Activated CD4-positive, alpha-beta T cell treated with anti-CD3 and anti-CD28 coated beads, Interleukin-2, amount 10 ng/mL, durations not matched to agents 24 days and 14 days (primary cell): ENCODE measurements at regions of chr11 and their contacts with region 1.

Region 1: DNA sequence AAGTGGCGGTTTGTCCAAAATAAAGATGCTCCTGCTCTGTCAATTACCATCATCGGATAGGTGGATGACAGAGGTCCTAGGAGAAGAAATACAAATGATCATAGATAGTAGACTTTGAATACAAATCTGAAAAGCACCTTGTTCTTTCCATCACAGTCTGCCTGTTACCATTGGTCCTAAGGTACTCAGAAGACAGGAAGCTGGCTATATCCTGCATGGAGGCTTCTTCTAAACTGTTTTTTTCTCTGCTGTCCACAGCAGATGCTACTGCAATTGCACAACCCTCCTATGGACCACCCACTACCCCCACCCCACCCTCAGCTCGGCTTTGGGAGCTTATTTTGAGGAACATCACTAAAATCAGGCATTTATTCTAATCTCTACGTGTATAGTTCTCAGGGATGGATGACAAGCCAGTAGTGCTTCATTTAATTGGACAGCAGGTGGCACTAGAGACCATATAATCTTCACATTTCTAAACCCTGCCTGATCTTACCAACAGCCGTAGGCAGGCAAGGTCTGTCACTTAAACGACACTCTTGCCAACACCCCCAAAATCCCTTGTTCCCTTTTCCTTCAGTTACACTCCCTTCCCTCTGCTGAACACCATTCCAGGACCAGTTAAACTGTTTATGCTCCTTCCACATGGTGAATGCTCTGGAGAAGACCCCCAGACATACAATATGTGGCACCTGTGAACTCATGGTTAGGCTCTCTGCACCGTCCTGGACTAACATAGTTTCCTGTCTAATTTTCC is 6.6 kb upstream of the PTS start:
- DNase-seq: peak; percentile 86
- H3K4me3 Mint-ChIP-seq: no peak overlapping the region
- H3K27ac Mint-ChIP-seq: no peak overlapping the region
- H3K4me1 Mint-ChIP-seq: peaks cover 10% of the 10 kb centered on the region
- H3K27me3 Mint-ChIP-seq: peaks cover 8% of the 10 kb centered on the region

Region 2: DNA sequence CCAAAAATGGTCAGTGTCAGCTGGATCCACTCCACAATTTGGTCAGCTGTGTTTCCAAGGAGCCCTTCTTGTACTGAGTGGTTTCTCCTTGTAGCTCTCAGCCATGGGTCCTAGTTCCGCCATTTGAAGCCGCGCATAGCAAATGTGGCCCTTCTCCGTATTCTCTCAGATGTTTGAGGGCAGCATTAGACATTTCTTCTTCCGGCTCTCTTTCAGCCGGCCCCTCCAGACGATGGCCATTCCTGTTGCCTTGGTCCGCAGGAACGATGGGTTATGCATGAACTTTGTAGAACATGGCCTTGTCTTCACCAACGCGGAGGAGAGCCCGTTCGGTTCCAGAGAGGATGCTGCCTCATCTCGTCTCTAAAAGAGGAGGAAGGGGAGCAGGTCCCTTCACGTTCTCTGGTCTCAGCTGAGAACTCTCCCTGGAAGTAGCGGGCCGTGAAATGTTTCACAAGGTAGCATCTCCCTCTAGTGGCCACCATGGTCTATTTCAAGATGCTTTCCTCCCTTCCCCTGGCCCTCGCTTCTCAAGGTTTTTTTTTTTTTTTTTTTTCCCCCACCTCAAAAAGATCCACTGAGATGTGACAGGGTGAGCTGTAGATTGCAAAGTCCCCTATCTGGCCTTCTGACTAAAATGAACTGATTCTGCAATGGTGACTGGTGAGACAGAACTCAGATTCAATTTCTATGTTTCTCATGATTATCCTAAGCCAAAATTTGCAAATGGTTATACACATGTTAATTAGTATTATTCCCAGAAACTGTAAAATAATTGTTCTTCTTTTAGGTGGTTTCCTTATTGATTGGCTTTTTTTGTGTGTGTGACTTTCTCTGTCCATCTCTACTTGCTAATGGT is 60.8 kb after region 1 on chr11:
- intact Hi-C with region 1: loop called (anchors 1 kb)
- DNase-seq: peak; percentile 91
- H3K4me3 Mint-ChIP-seq: peak overlapping the region; percentile 97
- H3K27ac Mint-ChIP-seq: peak overlapping the region; percentile 61
- H3K4me1 Mint-ChIP-seq: peaks cover 33% of the 10 kb centered on the region
- H3K27me3 Mint-ChIP-seq: peaks cover 1% of the 10 kb centered on the region

Region 3: GRCh38 chr11:112555491-112556364 is 336.1 kb after region 1 on chr11:
- intact Hi-C with region 1: loop called (anchors 2 kb)
- DNase-seq: peak; percentile 89
- H3K4me3 Mint-ChIP-seq: no peak overlapping the region
- H3K27ac Mint-ChIP-seq: no peak overlapping the region
- H3K4me1 Mint-ChIP-seq: peaks cover 2% of the 10 kb centered on the region
- H3K27me3 Mint-ChIP-seq: peaks cover 8% of the 10 kb centered on the region

Region 4: GRCh38 chr11:113113801-113114706 is 894.4 kb after region 1 on chr11:
- intact Hi-C with region 1: loop called (anchors 10 kb)
- DNase-seq: peak; percentile 59
- H3K4me3 Mint-ChIP-seq: no peak overlapping the region
- H3K27ac Mint-ChIP-seq: no peak overlapping the region
- H3K4me1 Mint-ChIP-seq: no peaks in the 10 kb centered on the region
- H3K27me3 Mint-ChIP-seq: peaks cover 10% of the 10 kb centered on the region

Region 5: GRCh38 chr11:113532697-113533424 is 1313.2 kb after region 1 on chr11:
- intact Hi-C with region 1: loop called (anchors 5 kb)
- DNase-seq: peak; percentile 84
- H3K4me3 Mint-ChIP-seq: no peak overlapping the region
- H3K27ac Mint-ChIP-seq: no peak overlapping the region
- H3K4me1 Mint-ChIP-seq: no peaks in the 10 kb centered on the region
- H3K27me3 Mint-ChIP-seq: peaks cover 17% of the 10 kb centered on the region